HCT116 (cell line): ENCODE measurements at regions of chr10 and their contacts with region 1.

Region 1: DNA sequence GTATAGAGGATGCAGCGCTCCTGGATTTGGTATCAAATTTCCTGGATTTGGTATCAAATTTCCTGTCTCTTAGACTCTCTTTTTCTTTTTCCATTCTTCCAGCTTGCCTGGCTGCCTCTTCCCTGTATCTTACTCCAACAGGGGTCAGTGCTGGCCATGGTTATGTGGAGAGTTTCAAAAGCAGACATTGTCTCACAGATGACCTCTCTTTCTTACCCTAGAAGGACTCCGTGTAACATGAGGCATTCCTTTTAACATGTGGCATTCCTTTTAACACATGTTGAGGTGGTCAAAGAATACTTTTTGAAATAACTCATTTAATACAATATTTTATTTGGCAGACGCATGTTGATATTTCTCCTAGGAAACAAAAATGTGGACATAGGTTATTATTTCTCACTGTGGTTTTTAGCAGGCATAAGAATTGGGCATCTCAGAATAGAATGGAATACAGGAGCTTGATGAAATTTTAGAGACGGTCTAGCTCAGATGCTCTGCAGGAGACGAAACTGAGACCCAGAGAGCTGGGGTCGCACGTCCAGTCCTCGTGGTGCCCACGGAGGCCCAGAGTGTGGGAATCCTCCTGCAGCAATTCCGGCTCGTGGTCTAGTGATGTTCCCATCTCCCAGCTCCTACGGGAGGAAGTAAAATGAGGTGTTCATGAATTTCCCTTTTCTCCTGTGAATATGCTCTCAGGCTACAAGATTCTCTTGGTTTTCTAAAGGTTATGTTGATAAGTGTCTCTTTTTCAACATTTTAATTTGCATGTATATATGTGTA is 59.6 kb upstream of the PITRM1 start:
- DNase-seq: no peak
- ATAC-seq: no peak
- H3K4me3 ChIP-seq: no peak overlapping the region
- H3K27ac ChIP-seq: no peak overlapping the region
- H3K4me1 ChIP-seq: peaks cover 13 to 14% of the 10 kb centered on the region in 2 experiments
- H3K27me3 ChIP-seq: peaks cover 21% of the 10 kb centered on the region; the same call in 1 of the 2 replicates
- CTCF ChIP-seq: peak in 1 of 3 experiments; percentile 3; a peak in 1 of 6 replicates
- POLR2A ChIP-seq: no peak
- RAD21 ChIP-seq: peak; percentile 27; the same call in 1 of the 2 replicates

Region 2: DNA sequence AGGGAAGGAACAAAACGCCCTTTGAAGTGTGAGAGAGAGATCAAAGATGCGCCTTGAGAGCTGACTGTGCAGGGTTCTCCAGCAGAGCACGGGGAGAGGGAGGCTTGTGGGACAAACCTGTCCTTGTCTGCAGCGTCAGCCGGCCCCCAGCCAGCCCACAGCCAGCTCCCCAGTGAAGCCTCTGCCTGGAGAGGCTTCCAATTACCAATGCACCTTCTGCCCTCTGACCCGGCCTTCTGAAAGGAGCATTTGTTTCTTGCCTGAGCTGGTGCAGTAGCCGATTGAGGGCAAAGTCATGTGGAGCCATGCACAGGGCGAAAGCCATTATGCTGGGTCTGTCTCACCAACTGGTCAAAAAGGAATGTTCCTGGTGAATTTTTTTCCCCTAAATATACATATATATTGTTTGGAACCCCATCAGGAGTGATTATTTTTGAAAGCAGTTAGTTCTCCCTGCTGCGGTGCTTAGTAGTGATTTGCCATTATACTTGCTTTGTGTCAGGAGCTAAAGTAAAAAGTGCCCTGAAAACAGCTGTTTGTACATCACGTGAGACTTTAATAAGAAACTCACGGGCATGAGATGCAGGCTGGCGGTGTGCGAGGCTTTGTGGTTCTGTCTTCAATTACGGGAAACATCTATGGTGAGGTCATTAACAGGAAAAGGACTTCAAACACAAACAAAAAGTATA is 284.2 kb after region 1 on chr10:
- CTCF ChIA-PET with region 1: no interaction called
- POLR2A ChIA-PET with region 1: no interaction called
- RAD21 ChIA-PET with region 1: no interaction called
- intact Hi-C with region 1: no loop called
- DNase-seq: no peak
- ATAC-seq: no peak
- H3K4me3 ChIP-seq: no peak overlapping the region
- H3K27ac ChIP-seq: no peak overlapping the region
- H3K4me1 ChIP-seq: no peaks in the 10 kb centered on the region
- H3K27me3 ChIP-seq: no peaks in the 10 kb centered on the region
- CTCF ChIP-seq: no peak
- POLR2A ChIP-seq: no peak
- RAD21 ChIP-seq: no peak

Region 3: GRCh38 chr10:4329225-4329624 is 1097.1 kb after region 1 on chr10:
- CTCF ChIA-PET with region 1: no interaction called
- POLR2A ChIA-PET with region 1: no interaction called
- RAD21 ChIA-PET with region 1: no interaction called
- intact Hi-C with region 1: loop called (anchors 5 kb)
- DNase-seq: no peak
- ATAC-seq: no peak
- H3K4me3 ChIP-seq: no peak overlapping the region
- H3K27ac ChIP-seq: no peak overlapping the region
- H3K4me1 ChIP-seq: peaks cover 0 to 10% of the 10 kb centered on the region in 2 experiments; a peak in 2 of 4 replicates
- H3K27me3 ChIP-seq: no peaks in the 10 kb centered on the region
- CTCF ChIP-seq: no peak
- POLR2A ChIP-seq: no peak
- RAD21 ChIP-seq: no peak